Right cardiac atrium (tissue), 5 donors: ENCODE measurements at regions of chr7 and their contacts with region 1.

Region 1: DNA sequence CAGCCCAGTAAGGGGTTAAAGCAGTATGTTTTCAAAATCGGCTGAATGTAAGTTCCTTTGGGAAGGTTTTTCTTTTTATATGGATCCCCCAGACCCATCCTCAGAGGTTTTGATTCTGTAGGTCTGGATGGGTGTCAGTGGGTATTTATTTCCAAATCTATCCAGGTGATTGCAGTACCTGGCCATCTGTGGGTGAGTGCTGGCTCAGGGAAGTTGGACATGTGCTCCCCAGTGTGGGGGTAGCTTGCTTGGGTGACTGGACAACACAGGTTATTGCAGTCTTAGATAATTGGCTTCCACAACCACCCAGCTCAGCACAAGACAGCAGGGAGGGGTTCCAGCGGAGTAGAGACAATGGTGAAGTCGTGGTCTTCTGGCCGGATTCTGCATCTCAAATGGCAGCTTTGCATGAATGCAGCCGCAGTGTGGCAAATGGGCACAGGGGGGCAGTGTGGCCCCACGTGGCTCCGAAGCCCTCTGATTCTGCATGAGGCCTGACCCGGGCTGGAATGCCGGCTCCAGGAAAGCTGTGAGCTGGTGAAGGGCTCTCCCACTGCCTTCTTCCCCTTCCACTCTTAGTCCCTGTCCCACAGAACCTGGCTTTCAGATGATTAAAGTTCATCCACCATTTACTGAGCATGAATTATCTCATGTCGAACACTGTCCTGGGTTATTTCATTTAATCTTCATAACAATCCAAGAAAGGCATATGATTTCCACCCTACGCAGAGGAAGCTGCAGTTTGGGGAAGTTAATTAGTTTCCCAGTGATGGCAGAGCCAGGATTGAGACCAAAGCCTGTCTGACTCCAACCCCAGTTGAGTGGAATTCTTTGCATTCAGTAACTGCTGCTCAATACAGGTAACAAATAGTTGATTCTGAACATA is 64.5 kb upstream of the SYPL1 start:
- DNase-seq: peak; percentile 85 to 95 (median 93)
- ATAC-seq: peak; percentile 86 to 88
- H3K4me3 ChIP-seq: no peak overlapping the region
- H3K27ac ChIP-seq: no peak overlapping the region
- H3K4me1 ChIP-seq: no peaks in the 10 kb centered on the region
- H3K27me3 ChIP-seq: no peaks in the 10 kb centered on the region

Region 2: GRCh38 chr7:106285051-106285854 is 108.6 kb after region 1 on chr7:
- intact Hi-C with region 1: loop called in 2 of 4 experiments (anchors 5 kb)
- DNase-seq: peak; percentile 99 to 100 (median 99)
- ATAC-seq: peak; percentile 97 to 98
- H3K4me3 ChIP-seq: peak overlapping the region; percentile 88
- H3K27ac ChIP-seq: peak overlapping the region; percentile 96
- H3K4me1 ChIP-seq: no peaks in the 10 kb centered on the region
- H3K27me3 ChIP-seq: no peaks in the 10 kb centered on the region

Region 3: DNA sequence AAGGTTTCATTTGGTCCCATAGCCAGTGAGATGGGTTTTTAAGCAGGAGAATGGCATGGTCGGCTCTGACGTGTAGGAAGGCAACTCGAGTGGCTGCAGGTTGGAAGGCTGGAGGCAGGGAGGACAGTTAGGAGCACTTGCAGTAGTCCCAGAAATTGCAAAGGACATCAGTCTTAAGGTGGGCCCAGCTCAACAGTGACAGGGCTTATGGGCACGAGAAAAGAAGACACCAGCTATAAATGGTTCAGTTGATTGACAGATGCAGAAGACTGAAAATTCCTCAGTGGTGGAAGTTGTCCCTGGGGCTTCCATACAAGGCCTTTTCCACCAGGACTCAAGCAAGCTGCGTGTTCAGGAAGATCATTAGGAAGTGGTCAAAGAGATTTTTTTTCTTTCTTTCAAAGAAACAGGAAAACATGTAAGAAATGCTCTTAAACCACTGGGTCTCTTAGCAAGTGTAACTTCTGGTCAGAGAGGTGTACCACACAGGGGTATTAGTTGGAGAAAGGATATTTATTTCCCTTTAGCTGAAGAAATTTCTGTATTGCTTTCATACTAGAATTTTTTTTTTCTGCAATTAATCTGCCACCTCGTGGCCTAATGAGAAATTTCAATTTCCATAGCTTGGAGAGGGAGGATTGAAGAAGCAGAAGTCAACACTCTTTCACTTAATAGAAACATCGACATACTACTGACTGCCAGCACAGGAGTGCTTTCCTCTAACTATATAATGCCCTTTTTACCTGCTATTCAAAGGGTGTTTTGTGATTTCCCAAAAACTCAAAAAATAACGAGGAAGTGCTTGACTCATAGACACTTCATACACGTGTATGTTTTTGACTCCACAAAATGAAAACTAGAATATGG is 285.6 kb after region 1 on chr7:
- intact Hi-C with region 1: loop called (anchors 2 to 5 kb)
- DNase-seq: no peak
- ATAC-seq: peak; percentile 42 to 53
- H3K4me3 ChIP-seq: no peak overlapping the region
- H3K27ac ChIP-seq: no peak overlapping the region
- H3K4me1 ChIP-seq: no peaks in the 10 kb centered on the region
- H3K27me3 ChIP-seq: no peaks in the 10 kb centered on the region

Region 4: DNA sequence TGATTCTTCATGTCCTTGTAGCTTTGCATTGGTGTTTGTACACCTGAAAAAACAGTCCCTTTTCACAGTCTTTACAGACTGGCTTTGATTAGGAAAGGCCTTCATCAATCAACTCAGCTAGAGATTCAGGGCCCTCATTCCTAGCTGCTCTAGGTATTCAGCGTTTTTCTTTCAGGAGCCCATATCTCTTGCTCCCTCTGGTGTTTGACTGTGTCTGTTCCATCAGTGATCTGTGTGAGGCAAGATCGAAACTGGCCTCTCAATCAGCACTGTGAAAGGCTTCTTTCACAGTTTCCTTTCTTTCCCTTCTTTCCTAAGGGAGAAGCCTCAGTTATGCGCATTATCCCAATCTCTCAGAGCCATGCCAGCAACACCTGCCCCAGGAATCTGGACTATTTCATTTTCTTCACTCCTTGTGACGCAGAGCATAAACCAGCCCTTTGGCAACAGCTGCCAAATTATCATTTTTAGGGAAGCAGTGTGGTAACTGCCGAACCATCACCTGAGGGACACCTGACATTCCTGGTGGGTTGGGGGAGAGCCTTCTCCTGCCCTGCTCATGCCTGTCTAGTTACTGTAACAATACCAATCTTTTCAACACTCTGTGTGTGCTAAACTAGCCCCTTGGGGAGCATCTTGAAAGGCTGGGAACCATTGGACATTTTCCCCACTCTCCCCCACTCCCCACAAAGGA is 560.0 kb after region 1 on chr7:
- intact Hi-C with region 1: loop called in 2 of 4 experiments (anchors 5 to 10 kb)
- DNase-seq: no peak
- ATAC-seq: peak; percentile 78 to 82
- H3K4me3 ChIP-seq: no peak overlapping the region
- H3K27ac ChIP-seq: no peak overlapping the region
- H3K4me1 ChIP-seq: no peaks in the 10 kb centered on the region
- H3K27me3 ChIP-seq: no peaks in the 10 kb centered on the region